ENCODE measurements at regions of chr19 and their contacts with region 1.

Region 1: DNA sequence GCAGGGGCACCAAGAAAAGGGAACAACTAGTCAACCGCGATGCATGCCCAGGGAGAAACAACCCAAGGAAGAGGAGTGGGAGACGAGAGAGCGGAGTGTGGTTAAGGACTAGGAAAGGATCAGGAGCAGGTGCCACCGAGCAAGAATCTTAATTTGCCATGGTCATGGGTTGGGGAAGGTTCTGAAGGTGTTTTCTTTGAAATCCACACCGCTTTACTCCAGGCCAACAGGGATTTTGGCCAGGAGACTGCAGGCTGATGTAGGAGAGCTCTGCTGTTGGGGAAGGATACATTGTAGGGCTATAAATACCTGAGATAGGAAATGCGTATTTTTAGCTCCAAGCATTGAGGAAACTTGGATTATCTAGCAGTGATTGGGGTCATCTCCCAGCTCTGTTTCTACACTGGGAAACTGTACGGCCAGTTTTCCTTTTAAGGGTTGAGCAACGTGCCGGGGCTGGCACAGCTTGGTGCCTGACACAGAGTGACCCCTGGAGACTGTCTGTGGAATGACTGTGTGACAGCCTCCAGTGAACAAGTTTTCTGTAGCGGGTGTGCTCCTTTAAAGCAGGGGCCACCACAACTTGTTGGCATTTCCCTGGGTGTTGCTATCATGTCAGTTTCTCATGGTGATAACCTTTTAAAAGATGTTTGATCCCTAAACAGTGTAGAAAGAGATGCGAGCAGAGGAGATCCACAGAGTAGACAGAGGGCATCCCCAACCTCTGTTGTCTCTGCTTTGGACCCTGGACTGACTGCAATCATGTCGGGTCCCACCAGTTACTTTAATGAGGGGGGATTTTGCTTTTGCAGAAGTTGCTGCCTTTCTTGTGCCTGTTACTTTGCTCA is 34.3 kb downstream of the ZNF536 start:
- DNase-seq: peak in 41 of 42 donors; percentile 37 to 90 (median 72)

Region 2: DNA sequence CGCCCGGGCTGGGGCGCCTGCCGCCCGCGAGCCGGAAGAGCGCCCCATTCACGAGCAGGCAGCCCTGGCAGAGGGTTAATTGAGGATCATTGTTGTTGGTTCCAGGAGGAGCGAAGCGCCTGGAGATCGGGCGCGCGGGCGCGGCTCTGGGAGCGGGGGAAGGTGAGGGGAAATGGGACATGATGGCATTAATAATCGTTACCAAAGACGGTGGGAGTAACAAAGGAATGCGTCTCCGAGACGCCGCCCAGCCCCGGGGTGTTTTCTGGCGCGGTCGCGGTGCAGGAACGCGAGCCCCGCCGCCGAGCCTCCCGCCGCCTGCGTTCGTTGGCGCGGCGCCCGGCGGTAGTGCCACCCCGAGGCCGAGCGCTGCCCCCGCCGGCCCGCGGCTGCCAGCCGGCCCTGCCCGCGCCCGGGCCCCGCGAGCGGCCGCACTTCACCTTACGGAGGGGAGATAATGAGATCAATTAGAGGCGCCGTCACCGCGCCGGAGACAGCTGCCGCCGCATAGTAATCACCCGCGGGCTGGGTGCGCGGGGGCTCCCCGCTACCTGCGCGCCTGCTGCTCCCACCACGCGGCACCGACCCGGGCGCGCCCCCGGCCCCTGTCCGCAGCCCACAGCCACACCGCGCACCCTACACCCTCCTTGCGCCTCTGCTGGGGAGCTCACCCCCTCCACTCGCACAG is 31.4 kb before region 1 on chr19:
- intact Hi-C with region 1: loop called (anchors 5 kb)
- DNase-seq: peak in 38 of 42 donors; percentile 28 to 81 (median 60)

Region 3: DNA sequence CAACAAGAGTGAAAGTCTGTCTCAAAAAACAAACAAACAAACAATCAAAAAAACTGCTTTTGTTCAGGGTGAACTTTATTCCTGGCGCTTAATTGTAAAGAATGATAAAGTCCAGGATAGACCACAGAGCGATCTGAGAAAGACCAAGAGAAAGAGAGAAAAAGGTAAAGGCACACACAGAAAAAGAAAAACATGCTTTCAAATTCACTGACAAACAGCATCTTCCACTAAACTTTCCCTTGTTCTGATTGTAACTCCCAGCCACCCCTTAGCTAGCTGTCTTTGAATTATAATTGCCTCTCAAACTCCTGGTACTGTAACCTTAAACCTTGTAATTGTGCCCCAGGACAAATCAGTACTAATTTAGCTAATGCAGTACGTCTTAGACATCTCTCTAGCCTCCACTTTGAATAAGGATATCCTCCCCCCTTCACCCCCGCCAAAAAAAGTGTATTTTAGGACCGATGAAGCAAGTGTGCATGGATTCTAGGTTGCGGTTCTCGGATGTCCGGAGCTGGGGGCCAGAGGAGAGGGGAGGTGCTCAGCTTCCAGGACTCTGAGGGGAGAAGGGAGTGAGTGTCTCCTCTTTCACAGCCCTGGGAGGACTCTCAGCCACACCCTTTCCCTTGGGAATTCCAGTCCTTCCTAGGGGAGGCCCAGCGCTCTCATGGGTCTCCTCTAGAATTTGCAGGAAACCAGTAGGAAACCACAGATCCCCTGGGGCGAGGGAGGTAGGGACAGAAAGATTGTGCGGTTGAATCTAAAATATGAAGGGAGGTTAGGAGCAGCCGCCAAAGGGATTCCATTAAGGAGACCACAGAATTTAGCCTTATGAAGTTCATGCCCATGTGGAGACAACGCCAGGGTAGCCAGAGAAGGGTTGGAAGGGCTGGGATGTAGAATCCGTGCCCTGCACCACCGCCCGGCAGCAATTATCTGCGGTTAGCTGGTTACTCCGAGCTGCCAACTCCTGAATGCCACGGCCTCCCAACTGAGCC is 14.6 kb before region 1 on chr19:
- intact Hi-C with region 1: no loop called
- DNase-seq: peak in 1 of 42 donors; percentile 34

Region 4: DNA sequence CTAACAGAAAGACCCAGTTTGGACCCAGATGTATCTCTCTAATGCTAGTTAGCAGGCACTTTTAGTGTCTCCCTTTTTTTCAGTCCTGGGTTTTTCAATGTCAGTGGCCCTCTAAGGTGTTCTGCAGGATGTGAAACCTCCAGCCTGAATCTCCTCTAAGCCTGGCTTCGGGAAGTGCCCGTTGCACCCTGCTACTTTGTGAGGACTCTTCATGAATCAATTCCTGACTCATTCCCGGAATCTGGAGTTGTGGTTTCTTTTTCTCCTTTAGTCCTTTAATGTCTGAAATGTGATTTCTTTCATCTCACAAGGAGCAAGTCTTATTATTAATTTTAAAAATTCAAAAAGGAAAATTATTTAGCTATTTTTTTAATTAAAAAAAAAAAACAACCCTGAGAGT is 81.7 kb after region 1 on chr19:
- intact Hi-C with region 1: no loop called
- DNase-seq: no peak

Measured in head of caudate nucleus (tissue), 42 donors.